ENCODE measurements at regions of chr9 and their contacts with region 1.

Region 1: GRCh38 chr9:113807173-113808061 is 68.7 kb upstream of the ZNF618 start:
- DNase-seq: peak; percentile 75
- H3K4me3 ChIP-seq: peak overlapping the region; percentile 32 to 34; a peak in 2 of 4 replicates
- H3K27ac ChIP-seq: no peak overlapping the region
- H3K4me1 ChIP-seq: peaks cover 0 to 5% of the 10 kb centered on the region in 2 experiments; a peak in 1 of 4 replicates
- H3K27me3 ChIP-seq: peaks cover 5% of the 10 kb centered on the region; the same call in 1 of the 2 replicates
- CTCF ChIP-seq: peak; percentile 88
- EP300 ChIP-seq: no peak
- RAD21 ChIP-seq: peak; percentile 85

Region 2: GRCh38 chr9:113712023-113712422 is 95.4 kb before region 1 on chr9:
- CTCF ChIA-PET with region 1: no interaction called
- POLR2A ChIA-PET with region 1: no interaction called
- DNase-seq: no peak
- H3K4me3 ChIP-seq: no peak overlapping the region
- H3K27ac ChIP-seq: no peak overlapping the region
- H3K4me1 ChIP-seq: no peaks in the 10 kb centered on the region
- H3K27me3 ChIP-seq: no peaks in the 10 kb centered on the region; the same call in 1 of the 2 replicates
- CTCF ChIP-seq: no peak
- EP300 ChIP-seq: no peak
- RAD21 ChIP-seq: no peak

Region 3: GRCh38 chr9:113770396-113770795 is 37.0 kb before region 1 on chr9:
- CTCF ChIA-PET with region 1: no interaction called
- POLR2A ChIA-PET with region 1: no interaction called
- DNase-seq: no peak
- H3K4me3 ChIP-seq: no peak overlapping the region
- H3K27ac ChIP-seq: no peak overlapping the region
- H3K4me1 ChIP-seq: peaks cover 0 to 8% of the 10 kb centered on the region in 2 experiments; a peak in 1 of 4 replicates
- H3K27me3 ChIP-seq: no peaks in the 10 kb centered on the region; the same call in 1 of the 2 replicates
- CTCF ChIP-seq: no peak
- EP300 ChIP-seq: no peak
- RAD21 ChIP-seq: no peak

Region 4: DNA sequence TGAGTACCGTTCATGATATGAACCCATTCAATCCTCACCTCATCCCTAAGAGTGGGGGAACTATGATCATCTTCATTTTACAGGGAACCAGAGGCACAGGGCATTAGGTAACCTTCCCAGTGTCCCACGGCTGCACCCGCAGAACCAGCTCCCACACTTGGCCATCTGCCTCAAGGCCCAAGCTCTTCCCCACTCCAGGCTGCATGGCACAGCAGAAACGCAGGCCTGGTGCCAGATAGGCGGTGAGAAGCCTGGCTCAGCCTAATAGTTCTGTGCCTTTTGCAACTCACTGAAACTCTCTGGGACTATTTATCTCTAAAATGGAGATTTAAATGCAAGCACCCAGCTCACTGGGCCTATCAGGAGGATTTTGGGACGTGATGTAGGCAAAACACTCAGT is 22.1 kb before region 1 on chr9:
- CTCF ChIA-PET with region 1: interaction called, 13 read pairs
- POLR2A ChIA-PET with region 1: no interaction called
- DNase-seq: no peak
- H3K4me3 ChIP-seq: no peak overlapping the region
- H3K27ac ChIP-seq: no peak overlapping the region
- H3K4me1 ChIP-seq: no peaks in the 10 kb centered on the region; a peak in 1 of 4 replicates
- H3K27me3 ChIP-seq: peaks cover 17% of the 10 kb centered on the region; the same call in 1 of the 2 replicates
- CTCF ChIP-seq: no peak
- EP300 ChIP-seq: no peak
- RAD21 ChIP-seq: no peak

Region 5: DNA sequence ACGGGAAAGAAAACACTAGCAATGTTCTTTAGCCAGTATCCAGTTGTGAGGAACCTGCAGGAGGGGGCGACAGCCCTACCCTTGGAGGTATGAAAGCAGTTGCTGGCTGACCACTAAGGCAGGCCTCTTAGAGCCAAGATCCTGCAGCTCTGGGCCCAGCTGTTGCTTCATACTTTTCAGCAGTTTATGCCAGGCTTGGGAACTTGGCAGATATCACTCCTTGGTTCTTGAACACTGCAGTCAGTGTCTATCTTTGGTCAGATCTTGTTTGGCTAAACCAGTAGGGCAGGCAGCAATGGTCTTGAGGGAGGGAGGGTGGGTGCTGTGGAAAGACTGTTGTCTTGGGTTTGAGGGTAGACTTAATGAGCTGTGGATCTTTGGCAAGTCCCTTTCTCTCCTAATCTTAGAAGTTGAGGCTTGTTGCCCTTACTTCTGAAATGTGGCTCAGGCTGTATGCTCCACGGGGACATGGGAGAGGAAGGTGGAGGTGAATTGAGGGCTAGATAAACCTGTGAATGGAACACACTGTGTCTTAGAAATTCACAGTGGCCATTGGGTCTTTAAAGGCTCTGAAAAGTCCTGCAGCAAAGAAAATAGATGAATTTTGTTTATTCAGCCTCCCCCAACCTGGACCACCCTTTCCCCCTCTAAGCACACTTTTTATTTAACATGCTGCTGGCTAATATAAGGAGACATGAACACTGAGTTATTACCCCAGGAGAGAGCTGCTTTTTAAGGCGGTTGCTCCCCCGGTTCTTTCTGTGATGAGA is 106.2 kb after region 1 on chr9:
- CTCF ChIA-PET with region 1: no interaction called
- POLR2A ChIA-PET with region 1: no interaction called
- DNase-seq: no peak
- H3K4me3 ChIP-seq: no peak overlapping the region
- H3K27ac ChIP-seq: no peak overlapping the region
- H3K4me1 ChIP-seq: peaks cover 6 to 16% of the 10 kb centered on the region in 2 experiments; a peak in 1 of 4 replicates
- H3K27me3 ChIP-seq: no peaks in the 10 kb centered on the region
- CTCF ChIP-seq: no peak
- EP300 ChIP-seq: no peak
- RAD21 ChIP-seq: no peak

Region 6: DNA sequence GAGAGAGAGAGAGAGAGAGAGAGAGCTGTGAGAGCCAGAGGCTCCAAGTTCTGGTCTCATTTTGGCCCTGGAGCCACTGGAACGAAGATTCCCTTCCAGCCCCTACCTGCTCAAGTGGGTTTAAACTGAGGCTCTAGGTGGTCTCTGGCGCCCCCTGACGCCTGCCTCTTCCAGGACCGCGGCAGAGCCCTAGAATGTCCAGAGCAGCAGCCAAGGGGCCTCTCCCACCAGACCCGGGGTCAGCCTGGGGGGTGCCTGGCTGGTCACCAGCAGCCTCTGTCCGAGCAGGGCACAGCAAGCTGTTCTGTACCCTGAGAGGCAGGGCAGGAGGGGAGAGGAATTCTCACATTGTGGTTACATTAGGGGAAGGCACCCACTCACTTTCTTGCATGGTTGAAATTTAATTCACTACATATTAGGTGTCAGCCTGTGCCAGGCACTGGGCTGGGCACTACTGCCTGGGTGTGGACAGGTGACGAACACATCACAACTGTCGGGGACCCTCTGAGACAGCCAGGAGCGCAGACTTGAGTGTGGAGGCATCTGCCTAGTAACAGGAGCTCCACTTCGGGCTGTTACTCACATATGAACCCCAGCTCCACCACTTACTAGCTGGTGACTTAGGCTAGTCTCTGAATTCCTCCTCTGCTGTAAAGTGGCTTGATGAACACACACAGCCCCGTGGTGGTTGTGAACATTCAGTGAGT is 226.1 kb after region 1 on chr9:
- CTCF ChIA-PET with region 1: interaction called, 26 read pairs
- POLR2A ChIA-PET with region 1: no interaction called
- DNase-seq: peak; percentile 83
- H3K4me3 ChIP-seq: peak overlapping the region in 1 of 2 experiments; percentile 23; a peak in 1 of 4 replicates
- H3K27ac ChIP-seq: no peak overlapping the region
- H3K4me1 ChIP-seq: no peaks in the 10 kb centered on the region; a peak in 1 of 4 replicates
- H3K27me3 ChIP-seq: no peaks in the 10 kb centered on the region
- CTCF ChIP-seq: peak; percentile 59
- EP300 ChIP-seq: no peak
- RAD21 ChIP-seq: peak; percentile 79

Region 7: GRCh38 chr9:114047717-114048116 is 240.3 kb after region 1 on chr9:
- CTCF ChIA-PET with region 1: interaction called, 12 read pairs
- POLR2A ChIA-PET with region 1: no interaction called
- DNase-seq: no peak
- H3K4me3 ChIP-seq: no peak overlapping the region
- H3K27ac ChIP-seq: no peak overlapping the region
- H3K4me1 ChIP-seq: no peaks in the 10 kb centered on the region
- H3K27me3 ChIP-seq: no peaks in the 10 kb centered on the region
- CTCF ChIP-seq: no peak
- EP300 ChIP-seq: no peak
- RAD21 ChIP-seq: peak; percentile 35

Measured in SK-N-SH (cell line).